ENCODE measurements at regions of chr7 and their contacts with region 1.

Region 1: DNA sequence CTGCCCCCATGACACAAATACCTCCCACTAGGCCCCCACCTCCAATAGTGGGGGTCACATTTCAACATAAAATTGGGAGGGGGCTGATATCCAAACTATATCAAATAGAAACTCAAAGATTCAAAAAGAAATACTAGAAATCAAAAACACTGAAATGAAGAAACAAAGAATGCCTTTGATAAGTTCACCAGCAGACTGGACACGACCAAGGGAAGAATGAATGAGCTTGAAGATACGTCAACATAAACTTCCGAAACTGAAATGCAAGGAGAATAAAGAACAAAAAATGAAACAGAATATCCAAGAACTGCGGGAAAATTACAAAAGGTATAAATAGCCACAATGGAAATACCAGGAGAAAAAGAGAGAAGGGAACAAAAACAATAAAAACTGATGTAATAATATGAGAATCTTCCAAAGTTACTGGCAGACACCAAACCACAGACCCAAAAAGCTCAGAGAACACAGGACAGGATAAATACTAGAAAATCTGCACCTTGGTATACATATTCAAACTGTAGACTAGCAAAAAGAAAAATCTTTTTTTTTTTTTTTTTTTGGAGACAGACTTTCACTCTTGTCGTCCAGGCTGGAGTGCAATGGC is 49.5 kb downstream of the BRI3 start:
- DNase-seq: no peak
- ATAC-seq: no peak

Region 2: GRCh38 chr7:98360221-98361124 is 29.4 kb after region 1 on chr7:
- intact Hi-C with region 1: loop called (anchors 1 kb)
- DNase-seq: no peak
- ATAC-seq: no peak

Region 3: GRCh38 chr7:98655611-98656010 is 324.6 kb after region 1 on chr7:
- intact Hi-C with region 1: no loop called
- DNase-seq: no peak
- ATAC-seq: no peak